ENCODE measurements at regions of chr1 and their contacts with region 1.

Region 1: DNA sequence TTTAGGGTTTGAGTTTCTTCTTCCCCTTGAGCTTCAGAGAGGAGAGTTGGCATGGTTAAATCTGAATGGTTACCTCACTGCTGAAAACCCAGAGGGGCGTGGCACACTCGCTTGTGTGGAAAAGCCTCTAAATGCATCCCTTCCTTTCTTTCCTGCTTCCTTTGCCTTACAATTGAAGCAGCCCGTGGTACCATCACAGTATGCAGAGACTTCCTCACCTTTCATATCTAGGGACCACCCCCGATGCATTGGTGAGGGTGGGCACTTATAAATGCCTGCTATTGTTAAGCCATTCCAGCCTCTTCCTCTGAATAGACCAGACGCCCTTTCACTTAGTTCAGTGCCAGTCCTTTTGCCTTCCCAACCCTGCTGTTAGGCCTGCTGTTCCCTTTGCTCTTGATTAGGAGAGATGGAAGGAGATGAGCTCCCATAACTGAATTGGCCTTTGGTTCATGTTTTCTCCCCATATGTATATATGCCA is 21.9 kb upstream of the LAX1 start:
- DNase-seq: no peak
- ATAC-seq: no peak
- H3K4me3 ChIP-seq: no peak overlapping the region
- H3K4me3 Mint-ChIP-seq: no peak overlapping the region
- H3K27ac ChIP-seq: peak overlapping the region; percentile 55
- H3K27ac Mint-ChIP-seq: peak overlapping the region; percentile 12 to 90
- H3K4me1 ChIP-seq: peaks cover 8 to 11% of the 10 kb centered on the region in 2 experiments
- H3K4me1 Mint-ChIP-seq: peaks cover 23 to 31% (median 30%) of the 10 kb centered on the region in 3 donors
- H3K27me3 ChIP-seq: no peaks in the 10 kb centered on the region
- H3K27me3 Mint-ChIP-seq: no peaks in the 10 kb centered on the region

Region 2: GRCh38 chr1:203726417-203726867 is 16.7 kb before region 1 on chr1:
- CTCF ChIA-PET with region 1: interaction called in 1 of 2 experiments, 3 read pairs
- POLR2A ChIA-PET with region 1: interaction called in 1 of 2 experiments, 13 read pairs
- DNase-seq: no peak
- ATAC-seq: no peak
- H3K4me3 ChIP-seq: no peak overlapping the region
- H3K4me3 Mint-ChIP-seq: no peak overlapping the region
- H3K27ac ChIP-seq: no peak overlapping the region
- H3K27ac Mint-ChIP-seq: peak overlapping the region; percentile 52 to 53
- H3K4me1 ChIP-seq: no peaks in the 10 kb centered on the region
- H3K4me1 Mint-ChIP-seq: no peaks in the 10 kb centered on the region
- H3K27me3 ChIP-seq: no peaks in the 10 kb centered on the region
- H3K27me3 Mint-ChIP-seq: no peaks in the 10 kb centered on the region